Activated naive CD4-positive, alpha-beta T cell treated with anti-CD3 and anti-CD28 coated beads, Interleukin-2, amount 10 ng/mL, durations not matched to agents 7 days and 5 days (primary cell): ENCODE measurements at regions of chr17 and their contacts with region 1.

Region 1: DNA sequence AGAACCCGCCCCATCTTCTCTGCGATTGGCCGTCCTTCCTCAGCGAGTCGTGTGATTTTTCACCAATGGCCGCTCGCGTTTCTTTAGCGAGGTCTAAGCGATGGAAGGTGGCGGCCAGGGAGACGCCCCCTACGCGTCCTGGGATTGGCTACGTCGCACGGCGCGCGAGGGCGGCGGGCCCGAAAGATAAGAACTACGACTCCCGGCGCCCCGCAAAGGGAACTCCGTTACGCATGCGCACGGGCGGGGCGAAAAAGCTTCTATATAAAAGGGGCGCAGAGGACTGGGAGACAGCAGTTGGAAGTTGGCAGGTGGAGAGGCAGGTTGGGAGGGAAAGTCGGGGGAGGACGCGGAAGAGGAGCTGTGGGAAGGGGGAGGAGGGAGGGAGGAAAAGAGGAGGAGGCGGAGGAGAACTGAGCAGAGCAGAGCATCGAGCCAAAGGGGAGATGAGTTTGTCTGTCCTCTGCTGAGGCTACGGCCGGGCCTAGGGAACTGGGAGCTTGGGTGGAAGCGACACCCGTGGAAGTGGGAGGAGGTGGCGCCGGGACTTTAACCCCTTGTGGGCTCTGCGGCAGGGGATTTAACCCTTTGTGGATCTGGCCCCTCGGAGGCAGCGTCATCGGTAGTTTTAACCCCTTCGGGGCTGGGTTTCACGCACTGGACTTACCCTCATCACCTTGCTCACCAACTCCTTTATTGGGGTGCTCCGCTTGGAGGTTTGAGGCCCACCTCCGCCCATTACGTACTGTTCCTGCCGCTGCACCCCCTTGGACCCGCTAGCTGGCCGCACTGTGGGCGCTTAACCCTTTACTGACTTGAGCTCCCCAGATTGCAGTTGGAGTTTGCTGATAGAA is at the start of gene HEXIM1:
- DNase-seq: peak; percentile 99
- H3K4me3 Mint-ChIP-seq: peak within 1 kb of the TSS; percentile 99
- H3K27ac Mint-ChIP-seq: peak within 1 kb of the TSS; percentile 100
- H3K4me1 Mint-ChIP-seq: peaks cover 56% of the 10 kb centered on the region
- H3K27me3 Mint-ChIP-seq: peaks cover 17% of the 10 kb centered on the region

Region 2: DNA sequence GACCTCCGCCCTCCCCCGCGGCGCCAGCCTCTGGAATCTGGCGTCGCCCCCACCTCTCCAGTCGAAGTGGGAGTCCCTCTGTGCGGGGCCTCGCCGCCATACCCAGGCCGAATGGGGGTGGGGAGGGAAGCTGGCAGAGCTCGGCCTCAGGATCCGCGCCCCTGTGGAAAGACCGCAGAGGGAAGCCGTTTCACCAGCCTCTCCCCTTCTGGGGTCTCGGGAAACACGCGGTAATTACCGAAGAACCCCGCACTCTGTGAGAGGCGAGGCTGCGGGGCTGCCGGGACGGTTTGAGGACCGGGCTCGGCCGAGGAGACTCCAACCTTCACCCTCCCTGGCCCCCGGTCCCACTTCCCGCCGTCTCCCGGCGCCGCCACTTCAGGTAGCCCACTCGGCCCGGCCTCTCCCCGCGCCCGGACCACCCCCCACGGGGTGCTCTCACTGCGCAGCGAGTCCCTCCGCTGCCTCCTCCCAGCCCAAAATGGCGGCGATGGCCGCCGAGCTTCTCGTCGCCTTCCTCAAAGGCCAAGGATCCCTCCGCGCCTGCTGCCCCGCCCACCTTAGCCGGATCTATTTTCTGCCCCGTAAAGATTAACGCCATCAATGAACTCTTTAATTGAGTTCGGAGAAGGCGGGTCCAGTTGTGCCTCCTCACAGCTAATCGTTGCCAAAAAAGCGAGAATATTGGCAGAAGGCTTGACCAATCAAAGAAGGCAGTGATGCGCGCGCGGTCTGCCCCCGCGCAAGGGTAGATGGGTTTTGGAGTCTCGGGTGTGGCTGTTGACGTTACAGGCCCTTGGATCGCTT is 12.8 kb after region 1 on chr17:
- CTCF ChIA-PET with region 1: interaction called, 63 read pairs
- DNase-seq: peak; percentile 98
- H3K4me3 Mint-ChIP-seq: peak overlapping the region; percentile 93
- H3K27ac Mint-ChIP-seq: peak overlapping the region; percentile 95
- H3K4me1 Mint-ChIP-seq: peaks cover 48% of the 10 kb centered on the region
- H3K27me3 Mint-ChIP-seq: no peaks in the 10 kb centered on the region

Region 3: GRCh38 chr17:45172454-45173286 is 24.3 kb after region 1 on chr17:
- CTCF ChIA-PET with region 1: interaction called, 15 read pairs
- DNase-seq: peak; percentile 72
- H3K4me3 Mint-ChIP-seq: peak overlapping the region; percentile 71
- H3K27ac Mint-ChIP-seq: peak overlapping the region; percentile 91
- H3K4me1 Mint-ChIP-seq: peaks cover 26% of the 10 kb centered on the region
- H3K27me3 Mint-ChIP-seq: peaks cover 7% of the 10 kb centered on the region